Activated CD8-positive, alpha-beta memory T cell treated with anti-CD3 and anti-CD28 coated beads, Interleukin-2, amount 10 ng/mL, durations not matched to agents 7 days and 5 days (primary cell): ENCODE measurements at regions of chr19 and their contacts with region 1.

Region 1: GRCh38 chr19:47019431-47020041 is at the start of gene NPAS1:
- DNase-seq: no peak
- ATAC-seq: peak; percentile 18
- H3K4me3 Mint-ChIP-seq: no peak within 1 kb of the TSS
- H3K27ac Mint-ChIP-seq: no peak within 1 kb of the TSS
- H3K4me1 Mint-ChIP-seq: peaks cover 10% of the 10 kb centered on the region
- H3K27me3 Mint-ChIP-seq: peaks cover 52% of the 10 kb centered on the region
- total RNA-seq, gene NPAS1: 0.41 to 0.68 TPM

Region 2: DNA sequence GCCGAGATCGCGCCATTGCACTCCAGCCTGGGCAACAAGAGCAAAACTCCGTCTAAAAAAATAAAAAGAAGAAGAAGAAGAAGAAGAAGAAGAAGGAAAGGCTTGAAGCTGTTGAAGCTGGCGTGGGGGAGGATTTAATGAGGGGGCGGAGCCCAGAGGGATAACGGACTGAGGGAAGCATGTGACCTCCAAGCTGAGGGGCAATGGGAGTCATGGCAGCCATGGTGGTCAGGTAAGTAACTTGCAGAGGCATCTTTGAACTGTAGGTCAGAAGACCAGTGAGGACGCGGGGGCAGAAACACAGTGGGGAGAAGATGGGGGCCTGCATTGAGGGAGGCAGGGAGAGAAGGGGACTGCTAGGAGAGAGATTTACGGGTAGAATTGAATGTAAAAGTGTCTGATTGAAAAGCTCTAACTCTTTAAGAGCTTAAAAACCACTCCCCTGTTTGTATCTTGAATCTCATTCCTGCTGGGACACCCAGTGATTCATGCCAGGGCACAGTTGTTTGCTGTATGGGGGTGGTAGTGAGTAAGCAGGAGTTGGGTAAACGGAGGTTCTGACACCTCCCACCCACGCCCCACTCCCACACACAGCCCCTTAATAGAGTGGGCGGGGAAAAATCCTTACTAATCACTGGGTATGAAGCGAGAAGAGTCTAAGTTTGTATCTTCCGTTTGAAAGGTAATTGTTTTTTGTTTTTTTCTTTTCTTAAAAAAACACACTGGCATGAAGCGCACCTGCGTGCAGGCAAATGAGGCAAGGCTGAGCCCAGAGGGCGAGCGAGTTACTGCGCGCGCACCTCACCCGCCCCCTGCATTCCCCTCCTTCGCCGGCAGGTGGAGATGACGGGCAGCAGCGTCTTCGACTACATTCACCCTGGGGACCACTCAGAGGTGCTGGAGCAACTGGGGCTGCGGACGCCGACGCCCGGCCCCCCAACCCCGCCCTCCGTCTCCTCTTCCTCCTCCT is 15.9 kb after region 1 on chr19:
- CTCF ChIA-PET with region 1: interaction called, 69 read pairs
- DNase-seq: peak; percentile 96
- ATAC-seq: peak; percentile 93
- H3K4me3 Mint-ChIP-seq: peak overlapping the region; percentile 88
- H3K27ac Mint-ChIP-seq: peak overlapping the region; percentile 79
- H3K4me1 Mint-ChIP-seq: peaks cover 17% of the 10 kb centered on the region
- H3K27me3 Mint-ChIP-seq: peaks cover 27% of the 10 kb centered on the region

Region 3: DNA sequence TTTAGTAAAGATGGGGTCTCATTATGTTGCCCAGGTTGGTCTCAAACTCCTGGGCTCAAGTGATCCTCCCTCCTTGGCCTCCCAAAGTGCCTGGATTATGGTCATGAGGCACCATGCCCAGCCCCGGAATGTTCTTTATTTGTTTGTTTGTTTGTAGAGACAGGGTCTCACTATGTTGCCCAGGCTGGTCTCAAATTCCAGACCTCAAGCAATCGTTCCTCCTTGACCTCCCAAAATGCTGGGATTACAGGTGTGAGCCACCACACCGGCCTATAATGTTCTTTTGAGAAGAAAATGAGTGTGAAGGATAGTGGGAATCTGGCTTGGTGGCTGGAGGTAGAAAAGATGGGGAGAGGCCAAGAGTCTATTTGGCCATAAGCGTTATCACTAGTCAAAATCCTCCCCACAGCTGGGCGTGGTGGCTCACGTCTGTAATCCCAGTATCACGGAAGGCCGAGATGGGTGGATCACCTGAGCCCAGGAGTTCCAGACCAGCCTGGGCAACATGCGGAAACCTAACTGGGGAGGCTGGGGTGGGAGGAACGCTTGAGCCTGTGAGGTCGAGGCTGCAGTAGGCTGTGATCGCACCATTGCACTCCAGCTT is 216.6 kb after region 1 on chr19:
- CTCF ChIA-PET with region 1: no interaction called
- DNase-seq: no peak
- ATAC-seq: no peak
- H3K4me3 Mint-ChIP-seq: no peak overlapping the region
- H3K27ac Mint-ChIP-seq: no peak overlapping the region
- H3K4me1 Mint-ChIP-seq: peaks cover 33% of the 10 kb centered on the region
- H3K27me3 Mint-ChIP-seq: peaks cover 11% of the 10 kb centered on the region